Pancreas (tissue), 10 donors: ENCODE measurements at regions of chr4 and their contacts with region 1.

Region 1: GRCh38 chr4:38768968-38769394 is 13.8 kb downstream of the TLR10 start:
- DNase-seq: no peak
- ATAC-seq: peak in 3 of 4 donors; percentile 73 to 80 (median 77)
- H3K4me3 ChIP-seq: no peak overlapping the region
- H3K27ac ChIP-seq: peak overlapping the region in 3 of 4 donors; percentile 22 to 59 (median 37)
- H3K4me1 ChIP-seq: no peaks in the 10 kb centered on the region
- H3K27me3 ChIP-seq: no peaks in the 10 kb centered on the region
- CTCF ChIP-seq: no peak

Region 2: GRCh38 chr4:38842994-38843393 is 74.0 kb after region 1 on chr4:
- intact Hi-C with region 1: loop called in 1 of 3 experiments (anchors 10 kb)
- DNase-seq: no peak
- ATAC-seq: no peak
- H3K4me3 ChIP-seq: no peak overlapping the region
- H3K27ac ChIP-seq: no peak overlapping the region
- H3K4me1 ChIP-seq: no peaks in the 10 kb centered on the region
- H3K27me3 ChIP-seq: no peaks in the 10 kb centered on the region
- CTCF ChIP-seq: no peak

Region 3: GRCh38 chr4:38867478-38868058 is 98.6 kb after region 1 on chr4 and contains the start of gene FAM114A1:
- intact Hi-C with region 1: loop called in 1 of 3 experiments (anchors 10 kb)
- DNase-seq: peak; percentile 78 to 91 (median 86)
- ATAC-seq: peak; percentile 90 to 97 (median 94)
- H3K4me3 ChIP-seq: peak within 1 kb of the TSS; percentile 63 to 83 (median 76)
- H3K27ac ChIP-seq: peak within 1 kb of the TSS; percentile 70 to 95 (median 85)
- H3K4me1 ChIP-seq: peaks cover 5 to 29% (median 9%) of the 10 kb centered on the region in 3 donors
- H3K27me3 ChIP-seq: no peaks in the 10 kb centered on the region
- CTCF ChIP-seq: no peak
- total RNA-seq, gene FAM114A1: 18.0 to 42.8 (median 21.9) TPM